CD4-positive, alpha-beta T cell (primary cell): ENCODE measurements at regions of chr19 and their contacts with region 1.

Region 1: DNA sequence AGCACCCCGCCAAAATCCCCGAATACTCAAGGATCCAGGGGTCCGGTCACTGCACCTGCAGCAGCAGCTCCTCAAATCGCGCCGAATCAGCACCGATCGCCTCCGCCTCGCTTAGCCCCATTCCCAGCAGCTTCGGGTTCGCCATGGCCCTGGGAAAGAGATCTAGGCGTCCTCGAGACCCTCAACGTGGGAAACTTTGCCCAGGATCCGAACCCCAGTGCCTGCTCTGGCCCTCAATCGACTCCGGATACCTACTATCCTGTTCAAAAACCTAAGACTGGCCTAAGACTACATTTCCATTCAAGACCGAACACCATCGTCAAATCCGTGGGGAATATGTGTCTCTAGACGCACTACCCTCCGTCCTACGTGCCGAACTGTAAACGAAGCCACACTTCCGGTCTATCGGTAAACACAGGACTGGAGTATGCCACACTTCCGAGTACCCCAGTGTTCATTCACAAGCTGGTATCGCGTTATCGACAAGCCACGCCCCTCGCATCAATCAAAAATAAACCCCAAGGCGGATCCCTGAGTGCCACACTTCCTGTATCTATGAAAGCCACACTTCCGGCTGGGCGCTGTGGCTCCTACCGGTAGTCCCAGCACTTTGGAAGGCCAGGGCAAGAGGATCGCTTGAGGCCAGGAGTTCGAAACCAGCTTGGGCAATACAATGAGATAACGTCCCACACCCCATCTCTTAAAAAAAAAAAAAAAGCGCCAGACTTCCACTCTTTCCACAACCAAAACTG is at the start of gene PIH1D1:
- DNase-seq: peak; percentile 84 to 98 (median 92)
- ATAC-seq: peak; percentile 61
- H3K4me3 ChIP-seq: peak within 1 kb of the TSS; percentile 99
- H3K4me3 Mint-ChIP-seq: peak within 1 kb of the TSS; percentile 94
- H3K27ac ChIP-seq: peak within 1 kb of the TSS; percentile 93 to 97
- H3K27ac Mint-ChIP-seq: peak within 1 kb of the TSS; percentile 98
- H3K4me1 ChIP-seq: peaks cover 69% of the 10 kb centered on the region
- H3K4me1 Mint-ChIP-seq: peaks cover 50% of the 10 kb centered on the region
- H3K27me3 ChIP-seq: no peaks in the 10 kb centered on the region
- H3K27me3 Mint-ChIP-seq: no peaks in the 10 kb centered on the region
- CTCF ChIP-seq: no peak
- total RNA-seq, gene PIH1D1: 145 to 151 TPM

Region 2: GRCh38 chr19:48819366-48819816 is 632.2 kb before region 1 on chr19:
- CTCF ChIA-PET with region 1: no interaction called
- POLR2A ChIA-PET with region 1: no interaction called
- intact Hi-C with region 1: no loop called
- DNase-seq: no peak
- ATAC-seq: no peak
- H3K4me3 ChIP-seq: no peak overlapping the region
- H3K4me3 Mint-ChIP-seq: no peak overlapping the region
- H3K27ac ChIP-seq: no peak overlapping the region
- H3K27ac Mint-ChIP-seq: no peak overlapping the region
- H3K4me1 ChIP-seq: no peaks in the 10 kb centered on the region
- H3K4me1 Mint-ChIP-seq: peaks cover 10% of the 10 kb centered on the region
- H3K27me3 ChIP-seq: no peaks in the 10 kb centered on the region
- H3K27me3 Mint-ChIP-seq: no peaks in the 10 kb centered on the region
- CTCF ChIP-seq: no peak

Region 3: GRCh38 chr19:49409441-49410029 is 42.1 kb before region 1 on chr19:
- CTCF ChIA-PET with region 1: no interaction called
- POLR2A ChIA-PET with region 1: interaction called, 10 read pairs
- intact Hi-C with region 1: no loop called
- DNase-seq: peak in 4 of 14 experiments; percentile 42 to 75 (median 57)
- ATAC-seq: peak; percentile 61
- H3K4me3 ChIP-seq: peak overlapping the region; percentile 11
- H3K4me3 Mint-ChIP-seq: peak overlapping the region; percentile 49
- H3K27ac ChIP-seq: peak overlapping the region; percentile 17 to 65
- H3K27ac Mint-ChIP-seq: peak overlapping the region; percentile 82
- H3K4me1 ChIP-seq: peaks cover 72% of the 10 kb centered on the region
- H3K4me1 Mint-ChIP-seq: peaks cover 67% of the 10 kb centered on the region
- H3K27me3 ChIP-seq: no peaks in the 10 kb centered on the region
- H3K27me3 Mint-ChIP-seq: no peaks in the 10 kb centered on the region
- CTCF ChIP-seq: no peak

Region 4: GRCh38 chr19:49468746-49469447 is 17.3 kb after region 1 on chr19:
- CTCF ChIA-PET with region 1: interaction called, 24 read pairs
- POLR2A ChIA-PET with region 1: interaction called, 120 read pairs
- intact Hi-C with region 1: loop called (anchors 1 kb)
- DNase-seq: peak; percentile 74 to 99 (median 84)
- ATAC-seq: peak; percentile 75
- H3K4me3 ChIP-seq: peak overlapping the region; percentile 9
- H3K4me3 Mint-ChIP-seq: peak overlapping the region; percentile 84
- H3K27ac ChIP-seq: peak overlapping the region; percentile 86 to 96
- H3K27ac Mint-ChIP-seq: peak overlapping the region; percentile 98
- H3K4me1 ChIP-seq: peaks cover 96% of the 10 kb centered on the region
- H3K4me1 Mint-ChIP-seq: peaks cover 42% of the 10 kb centered on the region
- H3K27me3 ChIP-seq: no peaks in the 10 kb centered on the region
- H3K27me3 Mint-ChIP-seq: no peaks in the 10 kb centered on the region
- CTCF ChIP-seq: no peak

Region 5: DNA sequence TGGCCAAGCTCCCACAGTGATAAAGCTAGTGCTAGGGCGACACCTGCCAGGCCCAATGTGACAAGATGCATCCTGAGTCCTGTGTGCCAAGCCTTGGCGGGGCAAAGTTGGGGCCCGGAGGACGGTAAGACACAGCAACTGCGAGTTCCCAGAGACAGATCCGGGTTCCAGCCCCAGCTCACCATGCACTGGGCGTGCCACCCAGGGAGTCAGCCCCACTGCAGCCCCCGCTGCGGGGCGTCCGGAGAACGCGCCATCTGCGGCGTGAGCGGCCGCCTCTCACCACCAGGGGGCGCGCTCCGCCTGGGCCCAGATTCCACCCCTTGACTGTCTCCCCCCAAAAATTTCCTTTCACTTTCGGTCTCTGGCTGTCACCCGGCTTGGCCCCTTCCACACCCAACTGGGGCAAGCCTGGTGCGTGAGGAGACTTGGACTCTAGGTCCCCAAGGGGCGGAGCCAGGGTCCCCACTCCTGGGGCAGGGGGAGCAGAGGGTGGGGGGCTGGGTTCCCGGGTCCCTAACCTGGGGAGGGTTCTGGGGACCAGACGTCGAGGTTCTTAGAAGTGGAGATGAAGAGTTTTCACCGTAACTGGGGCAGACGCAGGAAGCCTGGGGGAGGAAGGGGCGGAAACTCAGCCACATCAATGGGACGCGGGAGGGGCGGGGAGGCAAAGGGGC is 22.4 kb after region 1 on chr19 and contains the start of gene FLT3LG:
- CTCF ChIA-PET with region 1: interaction called, 24 read pairs
- POLR2A ChIA-PET with region 1: interaction called, 120 read pairs
- intact Hi-C with region 1: loop called (anchors 1 kb)
- DNase-seq: peak; percentile 85 to 98 (median 90)
- ATAC-seq: peak; percentile 49
- H3K4me3 ChIP-seq: peak within 1 kb of the TSS; percentile 97
- H3K4me3 Mint-ChIP-seq: peak within 1 kb of the TSS; percentile 100
- H3K27ac ChIP-seq: peak within 1 kb of the TSS; percentile 90 to 98
- H3K27ac Mint-ChIP-seq: peak within 1 kb of the TSS; percentile 98
- H3K4me1 ChIP-seq: peaks cover 78% of the 10 kb centered on the region
- H3K4me1 Mint-ChIP-seq: peaks cover 59% of the 10 kb centered on the region
- H3K27me3 ChIP-seq: no peaks in the 10 kb centered on the region
- H3K27me3 Mint-ChIP-seq: no peaks in the 10 kb centered on the region
- CTCF ChIP-seq: peak; percentile 95
- total RNA-seq, gene FLT3LG: 311 to 325 TPM

Region 6: DNA sequence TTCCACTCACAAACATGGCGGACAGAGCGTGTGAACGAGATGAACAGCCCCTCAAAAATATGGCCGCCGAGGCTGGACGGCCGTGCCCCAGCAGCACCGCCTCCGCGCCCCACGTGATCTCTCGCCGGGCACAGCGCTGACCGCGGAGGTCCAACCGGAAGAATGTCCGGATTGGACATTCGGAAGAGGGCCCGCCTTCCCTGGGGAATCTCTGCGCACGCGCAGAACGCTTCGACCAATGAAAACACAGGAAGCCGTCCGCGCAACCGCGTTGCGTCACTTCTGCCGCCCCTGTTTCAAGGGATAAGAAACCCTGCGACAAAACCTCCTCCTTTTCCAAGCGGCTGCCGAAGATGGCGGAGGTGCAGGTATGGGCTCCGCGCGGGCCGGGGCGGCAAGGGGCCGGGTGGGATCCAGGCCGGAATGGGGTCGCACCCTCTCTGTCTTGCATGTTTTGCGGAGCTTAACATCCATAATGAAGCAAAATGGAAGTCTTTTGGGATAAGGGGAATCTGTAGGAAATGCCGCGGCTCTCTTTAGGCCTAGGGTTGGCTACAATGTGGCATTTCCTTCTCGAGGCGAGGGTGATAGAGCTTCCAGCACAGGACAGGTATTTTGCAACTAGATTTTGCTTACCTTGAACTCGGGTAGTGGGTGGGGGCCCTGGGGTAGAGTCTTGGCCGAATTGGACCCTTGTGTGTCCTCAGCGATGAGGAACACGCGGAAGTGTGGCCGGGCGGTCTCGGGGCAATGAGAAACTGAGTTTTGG is 35.9 kb after region 1 on chr19 and contains the start of gene RPL13A:
- CTCF ChIA-PET with region 1: no interaction called
- POLR2A ChIA-PET with region 1: interaction called, 12 read pairs
- intact Hi-C with region 1: loop called in 1 of 2 experiments (anchors 1 kb)
- DNase-seq: peak; percentile 98 to 100 (median 99)
- ATAC-seq: peak; percentile 86
- H3K4me3 ChIP-seq: peak within 1 kb of the TSS; percentile 77
- H3K4me3 Mint-ChIP-seq: peak within 1 kb of the TSS; percentile 91
- H3K27ac ChIP-seq: peak within 1 kb of the TSS; percentile 60 to 81
- H3K27ac Mint-ChIP-seq: peak within 1 kb of the TSS; percentile 92
- H3K4me1 ChIP-seq: peaks cover 64% of the 10 kb centered on the region
- H3K4me1 Mint-ChIP-seq: peaks cover 55% of the 10 kb centered on the region
- H3K27me3 ChIP-seq: no peaks in the 10 kb centered on the region
- H3K27me3 Mint-ChIP-seq: no peaks in the 10 kb centered on the region
- CTCF ChIP-seq: no peak
- total RNA-seq, gene RPL13A: 5,328 to 5,481 TPM

Region 7: GRCh38 chr19:49727217-49728030 is 275.8 kb after region 1 on chr19:
- CTCF ChIA-PET with region 1: no interaction called
- POLR2A ChIA-PET with region 1: no interaction called
- intact Hi-C with region 1: no loop called
- DNase-seq: no peak
- ATAC-seq: no peak
- H3K4me3 ChIP-seq: no peak overlapping the region
- H3K4me3 Mint-ChIP-seq: no peak overlapping the region
- H3K27ac ChIP-seq: no peak overlapping the region
- H3K27ac Mint-ChIP-seq: no peak overlapping the region
- H3K4me1 ChIP-seq: no peaks in the 10 kb centered on the region
- H3K4me1 Mint-ChIP-seq: no peaks in the 10 kb centered on the region
- H3K27me3 ChIP-seq: no peaks in the 10 kb centered on the region
- H3K27me3 Mint-ChIP-seq: no peaks in the 10 kb centered on the region
- CTCF ChIP-seq: no peak